Naive thymus-derived CD4-positive, alpha-beta T cell (primary cell): ENCODE measurements at regions of chr5 and their contacts with region 1.

Region 1: DNA sequence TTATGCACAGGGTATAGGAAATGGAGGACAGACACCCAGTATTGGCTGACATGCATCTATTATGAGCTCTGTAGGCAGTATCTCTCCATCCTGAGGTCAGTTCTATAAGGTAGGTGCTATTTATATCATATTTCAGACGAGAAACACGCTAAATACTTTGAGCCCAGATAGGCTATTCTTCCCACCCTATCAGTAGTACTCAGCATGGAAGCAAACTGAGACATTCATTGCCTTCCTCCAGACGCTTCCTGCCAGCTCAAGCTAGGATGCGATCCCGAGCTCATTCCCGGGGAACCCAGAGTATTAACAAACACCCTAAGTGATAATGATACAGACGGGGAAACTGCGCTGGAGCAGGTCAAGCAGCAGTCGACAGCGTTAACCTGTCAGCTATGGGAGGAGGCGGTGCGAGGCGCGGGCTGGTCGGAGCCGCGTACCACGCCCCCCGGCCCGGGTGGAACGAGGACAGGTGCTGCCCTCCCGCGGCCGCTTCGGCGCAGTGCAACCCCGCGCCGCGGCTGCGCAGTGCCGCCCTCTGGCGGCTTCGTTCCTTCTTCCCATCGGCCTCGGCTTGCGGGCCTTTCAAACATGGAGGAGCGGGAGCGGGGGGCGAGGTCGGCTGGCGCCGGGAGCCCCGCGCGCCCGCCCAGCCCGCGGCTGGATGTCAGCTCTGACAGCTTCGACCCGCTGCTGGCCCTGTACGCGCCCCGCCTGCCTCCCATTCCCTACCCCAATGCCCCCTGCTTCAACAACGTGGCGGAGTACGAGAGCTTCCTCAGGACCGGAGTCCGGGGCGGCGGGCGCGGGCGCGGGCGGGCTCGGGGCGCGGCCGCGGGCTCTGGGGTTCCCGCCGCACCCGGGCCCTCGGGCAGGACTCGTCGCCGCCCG is at the start of gene LSM11:
- DNase-seq: peak; percentile 81 to 97 (median 89)
- ATAC-seq: peak; percentile 100
- H3K4me3 ChIP-seq: peak within 1 kb of the TSS; percentile 66
- H3K4me3 Mint-ChIP-seq: peak within 1 kb of the TSS; percentile 85 to 97 (median 93)
- H3K27ac ChIP-seq: peak within 1 kb of the TSS; percentile 74
- H3K27ac Mint-ChIP-seq: peak within 1 kb of the TSS; percentile 65 to 91 (median 82)
- H3K4me1 ChIP-seq: peaks cover 13% of the 10 kb centered on the region in 2 donors
- H3K4me1 Mint-ChIP-seq: peaks cover 7 to 42% (median 23%) of the 10 kb centered on the region in 7 donors
- H3K27me3 ChIP-seq: no peaks in the 10 kb centered on the region
- H3K27me3 Mint-ChIP-seq: no peaks in the 10 kb centered on the region
- total RNA-seq, gene LSM11: 1.6 to 5.0 (median 4.0) TPM

Region 2: GRCh38 chr5:157328277-157328912 is 415.0 kb before region 1 on chr5:
- CTCF ChIA-PET with region 1: interaction called, 7 read pairs
- POLR2A ChIA-PET with region 1: interaction called, 3 read pairs
- intact Hi-C with region 1: loop called (anchors 1 kb)
- DNase-seq: peak in 8 of 9 donors; percentile 42 to 67 (median 60)
- ATAC-seq: peak; percentile 93
- H3K4me3 ChIP-seq: no peak overlapping the region
- H3K4me3 Mint-ChIP-seq: peak overlapping the region; percentile 29 to 80 (median 68)
- H3K27ac ChIP-seq: peak overlapping the region; percentile 63
- H3K27ac Mint-ChIP-seq: peak overlapping the region; percentile 71 to 95 (median 91)
- H3K4me1 ChIP-seq: peaks cover 10 to 24% of the 10 kb centered on the region in 2 donors
- H3K4me1 Mint-ChIP-seq: peaks cover 28 to 50% (median 45%) of the 10 kb centered on the region in 7 donors
- H3K27me3 ChIP-seq: no peaks in the 10 kb centered on the region
- H3K27me3 Mint-ChIP-seq: no peaks in the 10 kb centered on the region

Region 3: GRCh38 chr5:157378502-157378901 is 364.9 kb before region 1 on chr5:
- CTCF ChIA-PET with region 1: interaction called, 3 read pairs
- POLR2A ChIA-PET with region 1: interaction called, 3 read pairs
- intact Hi-C with region 1: loop called in 1 of 2 experiments (anchors 5 kb)
- DNase-seq: no peak
- ATAC-seq: no peak
- H3K4me3 ChIP-seq: no peak overlapping the region
- H3K4me3 Mint-ChIP-seq: no peak overlapping the region
- H3K27ac ChIP-seq: no peak overlapping the region
- H3K27ac Mint-ChIP-seq: peak overlapping the region; percentile 3 to 83 (median 67)
- H3K4me1 ChIP-seq: no peaks in the 10 kb centered on the region
- H3K4me1 Mint-ChIP-seq: peaks cover 6 to 20% (median 12%) of the 10 kb centered on the region in 7 donors
- H3K27me3 ChIP-seq: no peaks in the 10 kb centered on the region
- H3K27me3 Mint-ChIP-seq: no peaks in the 10 kb centered on the region

Region 4: DNA sequence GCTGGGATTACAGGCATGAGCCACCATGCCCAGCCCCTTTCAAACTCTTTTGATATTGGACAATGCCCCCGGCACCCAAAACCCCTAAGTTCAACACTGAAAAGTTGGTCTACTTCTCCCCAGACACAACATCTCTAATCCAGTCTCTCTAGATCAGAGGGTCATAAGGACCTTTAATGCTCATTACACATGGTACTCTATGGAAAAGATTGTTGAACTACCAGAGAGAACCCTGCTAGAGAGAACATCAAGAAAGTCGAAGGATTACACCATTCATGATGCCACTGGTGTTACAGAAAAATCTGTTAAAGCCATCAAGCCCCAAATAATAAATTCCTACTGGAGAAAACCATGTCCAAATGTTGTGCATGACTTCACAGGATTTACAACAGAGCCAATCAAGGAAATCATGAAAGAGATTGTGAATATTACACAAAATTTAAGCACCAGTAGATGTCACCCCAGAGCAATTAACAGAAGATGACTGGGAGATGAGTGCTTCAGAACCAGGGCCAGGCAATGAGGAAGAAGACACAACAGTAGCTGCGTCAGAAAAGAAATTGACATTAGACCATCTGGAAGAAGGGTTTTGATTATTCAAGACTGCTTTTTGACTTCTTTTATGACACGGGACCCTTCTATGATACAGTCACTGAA is 311.7 kb before region 1 on chr5:
- CTCF ChIA-PET with region 1: interaction called, 16 read pairs
- POLR2A ChIA-PET with region 1: interaction called, 3 read pairs
- intact Hi-C with region 1: loop called (anchors 1 kb)
- DNase-seq: peak in 7 of 9 donors; percentile 19 to 60 (median 38)
- ATAC-seq: peak; percentile 91
- H3K4me3 ChIP-seq: no peak overlapping the region
- H3K4me3 Mint-ChIP-seq: peak overlapping the region in 1 of 10 donors; percentile 57
- H3K27ac ChIP-seq: no peak overlapping the region
- H3K27ac Mint-ChIP-seq: no peak overlapping the region
- H3K4me1 ChIP-seq: no peaks in the 10 kb centered on the region
- H3K4me1 Mint-ChIP-seq: peaks cover 0 to 9% (median 7%) of the 10 kb centered on the region in 7 donors
- H3K27me3 ChIP-seq: no peaks in the 10 kb centered on the region
- H3K27me3 Mint-ChIP-seq: peaks cover 0 to 28% (median 0%) of the 10 kb centered on the region in 5 donors

Region 5: GRCh38 chr5:157651623-157652549 is 91.5 kb before region 1 on chr5 and contains the start of gene SOX30:
- CTCF ChIA-PET with region 1: interaction called, 12 read pairs
- POLR2A ChIA-PET with region 1: no interaction called
- intact Hi-C with region 1: loop called (anchors 1 kb)
- DNase-seq: peak; percentile 68 to 87 (median 81)
- ATAC-seq: peak; percentile 98
- H3K4me3 ChIP-seq: peak within 1 kb of the TSS; percentile 54
- H3K4me3 Mint-ChIP-seq: peak within 1 kb of the TSS; percentile 65 to 88 (median 84)
- H3K27ac ChIP-seq: peak within 1 kb of the TSS; percentile 55
- H3K27ac Mint-ChIP-seq: peak within 1 kb of the TSS; percentile 59 to 91 (median 82)
- H3K4me1 ChIP-seq: peaks cover 0 to 4% of the 10 kb centered on the region in 2 donors
- H3K4me1 Mint-ChIP-seq: peaks cover 9 to 19% (median 16%) of the 10 kb centered on the region in 7 donors
- H3K27me3 ChIP-seq: no peaks in the 10 kb centered on the region
- H3K27me3 Mint-ChIP-seq: peaks cover 0 to 3% (median 0%) of the 10 kb centered on the region in 5 donors
- total RNA-seq, gene SOX30: 0.36 TPM in 1 of 5 experiments, not detected in the others

Region 6: GRCh38 chr5:157731272-157732129 is 11.9 kb before region 1 on chr5 and contains the start of gene THG1L:
- CTCF ChIA-PET with region 1: interaction called, 19 read pairs
- POLR2A ChIA-PET with region 1: interaction called, 3 read pairs
- intact Hi-C with region 1: loop called (anchors 1 kb)
- DNase-seq: peak; percentile 94 to 98 (median 96)
- ATAC-seq: peak; percentile 98
- H3K4me3 ChIP-seq: peak within 1 kb of the TSS; percentile 73
- H3K4me3 Mint-ChIP-seq: peak within 1 kb of the TSS; percentile 87 to 99 (median 97)
- H3K27ac ChIP-seq: peak within 1 kb of the TSS; percentile 73
- H3K27ac Mint-ChIP-seq: peak within 1 kb of the TSS; percentile 80 to 98 (median 93)
- H3K4me1 ChIP-seq: peaks cover 3 to 7% of the 10 kb centered on the region in 2 donors
- H3K4me1 Mint-ChIP-seq: peaks cover 9 to 26% (median 23%) of the 10 kb centered on the region in 7 donors
- H3K27me3 ChIP-seq: no peaks in the 10 kb centered on the region
- H3K27me3 Mint-ChIP-seq: no peaks in the 10 kb centered on the region
- total RNA-seq, gene THG1L: 6.2 to 17.4 (median 7.4) TPM

Region 7: DNA sequence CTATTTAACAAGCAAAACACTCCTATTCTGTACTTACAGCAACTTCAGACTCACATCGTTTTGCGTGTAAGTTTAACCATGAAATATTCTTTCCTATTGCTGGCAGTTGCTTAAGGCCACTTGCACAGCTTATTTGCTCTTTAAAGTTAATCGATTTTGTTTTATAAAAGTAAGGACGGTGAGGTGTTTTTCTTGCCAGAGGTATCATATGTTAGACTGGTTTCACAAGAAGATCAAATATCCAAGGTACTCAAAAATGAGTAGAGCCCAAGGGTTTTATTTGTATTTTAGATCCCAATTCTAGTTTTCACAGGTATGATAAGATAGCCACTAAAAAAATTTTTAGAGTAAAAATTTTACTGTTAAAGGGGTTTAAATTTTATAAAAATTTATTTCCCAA is 99.4 kb after region 1 on chr5:
- CTCF ChIA-PET with region 1: no interaction called
- POLR2A ChIA-PET with region 1: no interaction called
- intact Hi-C with region 1: no loop called
- DNase-seq: no peak
- ATAC-seq: no peak
- H3K4me3 ChIP-seq: no peak overlapping the region
- H3K4me3 Mint-ChIP-seq: no peak overlapping the region
- H3K27ac ChIP-seq: no peak overlapping the region
- H3K27ac Mint-ChIP-seq: peak overlapping the region in 1 of 9 donors; percentile 59
- H3K4me1 ChIP-seq: peaks cover 0 to 8% of the 10 kb centered on the region in 2 donors
- H3K4me1 Mint-ChIP-seq: peaks cover 9 to 45% (median 34%) of the 10 kb centered on the region in 7 donors
- H3K27me3 ChIP-seq: no peaks in the 10 kb centered on the region
- H3K27me3 Mint-ChIP-seq: no peaks in the 10 kb centered on the region